Head of caudate nucleus (tissue), 42 donors: ENCODE measurements at regions of chr7 and their contacts with region 1.

Region 1: DNA sequence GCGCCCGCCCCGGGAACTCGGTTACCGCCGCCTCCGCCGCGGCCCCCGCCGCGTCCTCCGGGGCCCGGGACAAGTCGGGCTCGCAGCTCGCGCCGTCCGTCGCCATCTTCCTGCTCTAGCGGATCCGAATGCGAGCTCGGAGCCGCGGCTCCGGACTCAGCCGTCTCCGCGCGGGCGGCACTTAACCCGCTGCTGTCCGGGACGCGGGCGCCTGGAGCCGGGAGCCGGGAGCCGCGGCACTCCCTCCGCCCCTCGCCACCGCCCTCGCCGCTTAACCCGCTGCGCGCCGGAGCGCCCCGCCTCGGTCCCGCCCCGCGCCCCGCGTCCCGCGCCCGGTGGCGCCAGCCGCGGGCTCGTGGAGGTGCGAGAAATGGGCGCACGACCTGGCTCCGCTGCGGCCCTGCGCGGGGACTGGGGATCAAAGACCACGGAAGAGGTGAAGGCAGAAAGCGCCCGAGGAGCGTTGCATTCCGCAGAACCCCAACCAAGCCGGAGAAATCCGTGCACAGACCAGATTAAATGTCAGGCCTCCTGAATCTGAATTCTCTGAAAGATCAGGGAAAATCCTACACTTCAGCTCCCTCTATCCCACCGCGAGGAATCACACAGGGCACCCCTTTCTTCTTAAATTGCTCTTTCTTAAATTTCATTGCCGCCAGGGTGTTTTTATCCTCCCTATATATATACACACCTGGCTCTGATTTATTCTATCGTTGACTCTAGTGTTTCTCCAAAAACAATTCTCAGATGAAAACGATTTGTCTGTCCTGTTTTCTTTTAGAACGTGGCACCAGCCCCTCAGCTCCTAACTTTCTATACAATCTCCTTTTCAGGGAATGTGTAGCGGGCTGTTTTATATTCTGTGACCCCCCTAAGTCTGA is at the start of gene CTTNBP2:
- DNase-seq: peak in 41 of 42 donors; percentile 48 to 91 (median 79)

Region 2: DNA sequence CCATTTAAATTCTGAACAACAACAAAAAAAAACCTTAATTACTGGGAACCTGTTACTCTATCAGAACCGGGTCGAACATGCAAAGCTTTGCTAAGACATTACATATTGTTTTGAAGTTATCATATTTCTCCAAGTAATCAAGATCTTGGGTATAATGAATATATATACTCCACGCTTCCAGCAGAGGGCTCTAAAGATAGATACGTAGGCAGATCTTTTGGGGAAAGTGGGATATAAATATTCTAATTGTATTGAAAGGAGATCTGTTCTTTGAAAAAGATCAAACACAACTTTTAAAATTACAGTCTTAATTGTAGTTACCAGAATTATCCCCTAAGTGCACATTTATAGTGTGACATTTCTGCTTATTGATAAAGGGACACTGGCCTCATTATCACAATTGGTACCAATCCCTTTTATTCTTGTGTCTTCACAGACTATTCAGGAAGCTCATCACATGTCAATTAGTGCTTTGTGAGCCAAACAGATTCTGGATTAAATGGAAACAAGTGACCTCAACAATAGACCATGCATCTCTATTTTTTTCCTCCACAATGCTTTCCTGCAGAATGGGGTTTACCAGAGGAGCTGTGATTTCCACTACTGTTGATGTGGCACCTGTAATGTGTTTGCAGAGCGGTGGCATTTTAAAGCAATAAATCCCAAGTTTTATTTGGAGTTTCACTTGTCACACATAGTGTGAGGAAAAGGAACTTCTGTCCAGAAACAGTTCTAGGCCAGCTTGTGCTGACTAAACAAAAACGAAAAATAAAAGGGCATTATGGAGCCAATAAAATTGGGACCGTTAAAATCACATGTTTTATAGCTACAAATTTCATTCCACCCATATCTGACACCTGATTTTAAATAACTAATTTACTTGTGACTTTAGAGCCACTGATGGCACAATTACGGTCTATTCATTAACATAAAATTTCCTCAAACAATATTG is 122.7 kb before region 1 on chr7:
- intact Hi-C with region 1: loop called (anchors 5 kb)
- DNase-seq: peak in 4 of 42 donors; percentile 30 to 59 (median 34)

Region 3: GRCh38 chr7:117808341-117808757 is 65.2 kb before region 1 on chr7:
- intact Hi-C with region 1: loop called (anchors 10 kb)
- DNase-seq: peak in 32 of 42 donors; percentile 25 to 86 (median 60)

Region 4: DNA sequence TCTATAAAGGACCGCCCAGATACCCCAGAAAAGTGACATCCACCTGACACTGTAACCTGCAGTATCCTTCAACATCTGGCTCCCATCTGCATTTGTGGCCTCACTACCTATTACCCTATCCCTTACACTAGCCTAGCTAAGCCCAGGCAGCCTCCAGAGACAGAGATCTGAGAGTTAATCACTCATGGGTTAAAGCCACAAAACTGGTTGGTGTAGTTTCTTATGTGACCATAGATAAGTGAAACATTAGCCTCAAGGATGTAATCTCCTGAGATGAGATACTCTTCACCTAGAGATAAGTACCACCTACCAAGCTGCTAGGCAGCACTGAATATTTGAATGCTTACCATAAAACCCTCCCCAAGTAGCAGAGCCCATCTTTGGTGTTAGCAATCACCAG is 35.7 kb before region 1 on chr7:
- intact Hi-C with region 1: no loop called
- DNase-seq: no peak

Region 5: DNA sequence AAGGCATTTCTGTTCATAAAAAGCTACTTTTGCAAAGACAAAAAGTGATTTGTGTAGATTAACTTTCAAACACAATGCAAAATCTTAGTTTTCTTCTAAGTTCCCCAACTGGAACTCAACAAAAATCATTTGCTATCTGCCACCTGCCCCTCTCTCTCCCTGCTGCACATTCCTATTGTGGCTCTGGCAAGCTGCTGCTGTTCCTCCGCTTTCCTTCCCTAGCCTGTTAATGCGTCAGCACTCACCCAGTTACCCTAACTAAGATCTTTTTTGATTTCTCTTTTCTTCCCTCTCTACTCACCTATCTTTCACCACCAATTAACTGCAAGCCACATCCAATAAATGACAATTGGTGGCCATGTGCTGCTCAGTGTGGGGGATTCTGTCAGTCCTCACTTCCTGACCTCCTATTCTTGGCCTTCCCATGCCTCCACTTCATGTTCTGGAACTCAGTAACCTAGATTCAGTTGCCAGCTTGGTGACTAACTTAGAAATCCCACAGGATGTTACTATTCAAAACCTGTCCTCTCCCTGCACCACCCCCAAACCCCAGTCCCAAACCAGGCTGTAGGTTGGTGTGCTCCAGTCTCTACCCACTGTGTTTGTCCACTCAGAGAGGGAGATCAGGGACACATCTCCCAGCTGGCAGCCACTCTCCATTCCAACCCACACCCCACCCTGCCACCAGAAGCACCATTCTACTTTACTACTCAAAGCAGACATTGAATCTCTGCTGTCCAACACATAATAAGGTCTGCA is 139.9 kb after region 1 on chr7:
- intact Hi-C with region 1: no loop called
- DNase-seq: no peak